ENCODE measurements at regions of chr2 and their contacts with region 1.

Region 1: GRCh38 chr2:99180755-99181623 is at the starts of genes MITD1 and MRPL30:
- DNase-seq: peak; percentile 96
- H3K4me3 ChIP-seq: peak within 1 kb of the TSS; percentile 81
- H3K27ac ChIP-seq: peak within 1 kb of the TSS; percentile 80
- H3K4me1 ChIP-seq: peaks cover 7% of the 10 kb centered on the region
- H3K27me3 ChIP-seq: no peaks in the 10 kb centered on the region
- CTCF ChIP-seq: no peak
- total RNA-seq, gene MITD1: 24.6 to 25.3 TPM
- total RNA-seq, gene MRPL30: 25.9 to 26.9 TPM

Region 2: DNA sequence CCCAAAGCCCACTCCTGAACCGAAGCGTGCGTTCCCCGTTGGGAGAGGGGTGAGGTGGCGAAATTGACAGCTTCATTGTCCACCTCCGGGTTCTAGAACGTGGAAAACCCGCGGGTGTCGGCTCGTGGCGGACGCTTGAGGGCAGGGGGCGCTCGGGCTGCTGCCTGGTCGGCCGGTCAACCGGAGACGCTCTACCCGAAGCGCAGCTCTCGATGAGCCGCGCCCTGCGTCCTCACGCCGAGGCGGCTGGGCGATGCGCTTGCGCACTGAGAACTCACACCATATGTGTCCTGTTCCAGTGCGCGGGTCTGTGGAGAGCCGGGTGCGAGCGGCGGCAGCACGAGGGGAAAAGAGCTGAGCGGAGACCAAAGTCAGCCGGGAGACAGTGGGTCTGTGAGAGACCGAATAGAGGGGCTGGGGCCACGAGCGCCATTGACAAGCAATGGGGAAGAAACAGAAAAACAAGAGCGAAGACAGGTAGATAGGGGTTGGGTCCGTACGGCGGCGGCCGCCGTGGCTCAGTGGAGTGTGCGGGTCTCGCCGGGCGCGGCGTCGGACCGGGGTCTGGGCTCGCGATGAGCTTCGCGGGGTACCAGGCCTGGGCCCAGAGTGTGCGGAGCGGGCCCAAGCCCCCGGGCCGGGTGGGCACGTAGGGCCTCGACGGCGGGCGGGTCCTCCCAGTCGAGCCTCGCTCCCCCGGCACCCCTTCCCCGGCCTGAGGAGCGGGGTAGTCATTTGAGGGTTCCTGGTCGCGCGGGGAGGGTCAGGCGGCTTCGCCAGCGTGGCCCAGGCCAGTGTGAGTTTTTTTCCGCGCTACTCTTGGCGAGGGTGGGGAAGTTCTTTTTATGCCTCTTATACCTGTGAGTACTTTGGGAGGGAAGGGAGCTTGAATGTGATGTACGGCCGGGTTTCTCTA is 156.4 kb after region 1 on chr2 and contains the start of gene EIF5B:
- intact Hi-C with region 1: loop called (anchors 10 kb)
- DNase-seq: peak; percentile 97
- H3K4me3 ChIP-seq: peak within 1 kb of the TSS; percentile 95
- H3K27ac ChIP-seq: peak within 1 kb of the TSS; percentile 91
- H3K4me1 ChIP-seq: peaks cover 11% of the 10 kb centered on the region
- H3K27me3 ChIP-seq: no peaks in the 10 kb centered on the region
- CTCF ChIP-seq: peak; percentile 57
- total RNA-seq, gene EIF5B: 27.1 to 40.5 TPM